Endothelial cell of umbilical vein (primary cell): ENCODE measurements at regions of chr10 and their contacts with region 1.

Region 1: GRCh38 chr10:132637477-132638129 is 100.0 kb downstream of the INPP5A start:
- DNase-seq: peak; percentile 68
- H3K4me3 ChIP-seq: no peak overlapping the region
- H3K27ac ChIP-seq: no peak overlapping the region
- H3K4me1 ChIP-seq: peaks cover 2% of the 10 kb centered on the region
- H3K27me3 ChIP-seq: no peaks in the 10 kb centered on the region
- CTCF ChIP-seq: peak; percentile 60 to 66
- POLR2A ChIP-seq: no peak

Region 2: DNA sequence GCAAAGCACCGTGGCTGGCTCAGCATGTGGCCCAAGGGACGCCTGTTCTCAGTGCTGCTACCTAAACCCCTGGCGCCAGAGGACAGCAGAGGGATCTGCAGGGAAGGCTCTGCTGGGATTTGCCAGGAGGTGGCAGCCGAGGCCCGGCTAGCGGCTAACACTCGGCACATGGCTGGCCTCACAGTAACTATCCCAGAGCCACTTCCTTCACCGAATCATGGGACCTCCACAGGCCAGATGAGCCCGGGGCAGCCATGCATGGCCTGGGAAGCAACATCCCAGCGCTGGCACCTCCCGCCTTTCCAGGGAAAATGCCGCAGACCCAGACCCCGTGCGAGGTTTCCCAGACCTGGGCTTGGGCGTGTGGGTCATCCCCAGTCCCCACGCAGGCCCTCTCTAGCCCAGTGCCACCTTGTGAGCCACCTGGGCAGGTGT is 414.4 kb before region 1 on chr10:
- CTCF ChIA-PET with region 1: no interaction called
- POLR2A ChIA-PET with region 1: no interaction called
- dilution Hi-C with region 1: no loop called
- intact Hi-C with region 1: loop called (anchors 1 kb)
- DNase-seq: peak; percentile 79
- H3K4me3 ChIP-seq: no peak overlapping the region
- H3K27ac ChIP-seq: no peak overlapping the region
- H3K4me1 ChIP-seq: no peaks in the 10 kb centered on the region
- H3K27me3 ChIP-seq: no peaks in the 10 kb centered on the region
- CTCF ChIP-seq: peak; percentile 87 to 98
- POLR2A ChIP-seq: no peak

Region 3: GRCh38 chr10:132281915-132282666 is 355.5 kb before region 1 on chr10:
- CTCF ChIA-PET with region 1: no interaction called
- POLR2A ChIA-PET with region 1: no interaction called
- dilution Hi-C with region 1: no loop called
- intact Hi-C with region 1: no loop called
- DNase-seq: no peak
- H3K4me3 ChIP-seq: no peak overlapping the region
- H3K27ac ChIP-seq: no peak overlapping the region
- H3K4me1 ChIP-seq: no peaks in the 10 kb centered on the region
- H3K27me3 ChIP-seq: no peaks in the 10 kb centered on the region
- CTCF ChIP-seq: no peak
- POLR2A ChIP-seq: no peak

Region 4: DNA sequence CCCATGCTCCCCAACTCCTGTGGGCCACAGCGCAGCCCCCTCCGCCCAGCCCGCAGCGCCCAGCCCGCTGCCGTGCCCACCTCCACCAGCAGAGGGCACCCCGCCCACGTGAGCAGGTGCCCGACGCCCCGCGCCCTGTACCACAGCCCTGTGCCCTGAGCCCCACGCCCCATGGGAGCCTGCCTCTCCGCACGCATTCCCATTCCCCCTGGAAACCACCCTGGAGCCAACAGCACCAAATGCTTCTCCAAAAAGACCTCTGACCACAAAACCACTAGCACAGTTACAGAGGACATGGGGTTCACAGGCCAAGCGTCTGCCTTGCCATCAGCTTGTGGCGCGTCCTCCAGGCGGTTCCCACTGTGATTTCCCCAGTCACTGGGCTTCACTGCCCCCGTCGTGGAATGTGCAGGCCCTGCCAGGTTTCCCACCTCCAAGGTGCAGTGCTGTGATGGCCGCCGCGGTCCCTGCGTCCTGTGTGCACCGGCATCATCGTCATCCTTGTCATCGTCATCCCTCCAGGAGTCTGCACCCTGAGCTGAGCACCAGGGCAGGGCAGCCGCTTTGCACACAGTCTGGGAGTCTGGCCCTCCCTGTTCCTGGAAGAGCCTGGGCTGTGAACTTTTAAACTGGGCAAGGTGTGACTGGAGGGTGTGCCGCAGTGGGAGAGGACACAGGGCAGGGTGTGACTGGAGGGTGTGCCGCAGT is 178.9 kb before region 1 on chr10:
- CTCF ChIA-PET with region 1: interaction called, 19 read pairs
- POLR2A ChIA-PET with region 1: no interaction called
- dilution Hi-C with region 1: no loop called
- intact Hi-C with region 1: loop called (anchors 1 kb)
- DNase-seq: peak; percentile 21
- H3K4me3 ChIP-seq: no peak overlapping the region
- H3K27ac ChIP-seq: no peak overlapping the region
- H3K4me1 ChIP-seq: no peaks in the 10 kb centered on the region
- H3K27me3 ChIP-seq: no peaks in the 10 kb centered on the region
- CTCF ChIP-seq: peak; percentile 86 to 93
- POLR2A ChIP-seq: no peak

Region 5: GRCh38 chr10:132536971-132537712 is 100.5 kb before region 1 on chr10:
- CTCF ChIA-PET with region 1: interaction called, 3 read pairs
- POLR2A ChIA-PET with region 1: no interaction called
- dilution Hi-C with region 1: no loop called
- intact Hi-C with region 1: loop called (anchors 1 kb)
- DNase-seq: peak; percentile 99
- H3K4me3 ChIP-seq: peak overlapping the region; percentile 43 to 58 (median 45)
- H3K27ac ChIP-seq: peak overlapping the region; percentile 71
- H3K4me1 ChIP-seq: peaks cover 33% of the 10 kb centered on the region
- H3K27me3 ChIP-seq: no peaks in the 10 kb centered on the region
- CTCF ChIP-seq: peak in 1 of 2 donors; percentile 38
- POLR2A ChIP-seq: no peak

Region 6: DNA sequence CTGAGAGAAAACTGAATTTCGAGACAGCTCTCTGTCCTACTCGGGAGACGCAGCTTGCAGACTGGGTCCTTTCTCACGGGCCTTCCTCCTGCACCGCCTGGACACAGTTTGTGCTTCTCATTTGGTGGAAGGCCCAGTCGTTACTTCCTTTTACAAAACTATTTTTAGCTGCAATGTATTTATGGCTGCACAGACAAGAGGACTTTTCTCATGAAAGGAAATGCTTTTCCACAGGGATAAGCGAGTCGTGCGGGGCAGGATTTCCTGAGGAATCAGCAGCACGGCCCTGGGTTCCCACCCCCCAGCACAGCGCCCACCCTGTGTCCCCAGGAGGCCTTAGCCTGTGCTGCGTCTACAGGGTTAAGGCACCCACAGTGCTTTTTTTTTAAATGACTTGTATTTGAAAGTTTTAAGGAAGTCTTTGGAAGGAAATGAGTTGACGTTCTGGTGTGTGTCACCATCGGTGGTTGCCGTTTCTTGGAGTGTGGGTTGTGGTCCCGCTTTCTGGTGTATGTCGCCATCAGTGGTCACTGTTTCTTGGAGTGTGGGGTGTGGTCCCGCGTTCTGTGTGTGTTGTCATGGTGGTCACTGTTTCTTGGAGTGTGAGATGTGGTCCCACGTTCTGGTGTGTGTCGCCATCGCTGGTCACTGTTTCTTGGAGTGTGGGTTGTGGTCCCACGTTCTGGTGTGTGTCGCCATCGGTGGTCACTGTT is 49.1 kb before region 1 on chr10:
- CTCF ChIA-PET with region 1: no interaction called
- POLR2A ChIA-PET with region 1: no interaction called
- dilution Hi-C with region 1: no loop called
- intact Hi-C with region 1: loop called (anchors 1 kb)
- DNase-seq: peak; percentile 92
- H3K4me3 ChIP-seq: peak overlapping the region in 1 of 3 experiments; percentile 14
- H3K27ac ChIP-seq: peak overlapping the region; percentile 31
- H3K4me1 ChIP-seq: peaks cover 39% of the 10 kb centered on the region
- H3K27me3 ChIP-seq: no peaks in the 10 kb centered on the region
- CTCF ChIP-seq: no peak
- POLR2A ChIP-seq: no peak

Region 7: GRCh38 chr10:132606536-132607316 is 30.9 kb before region 1 on chr10:
- CTCF ChIA-PET with region 1: no interaction called
- POLR2A ChIA-PET with region 1: no interaction called
- dilution Hi-C with region 1: no loop called
- intact Hi-C with region 1: no loop called
- DNase-seq: no peak
- H3K4me3 ChIP-seq: no peak overlapping the region
- H3K27ac ChIP-seq: no peak overlapping the region
- H3K4me1 ChIP-seq: no peaks in the 10 kb centered on the region
- H3K27me3 ChIP-seq: no peaks in the 10 kb centered on the region
- CTCF ChIP-seq: no peak
- POLR2A ChIP-seq: no peak